ENCODE measurements at regions of chr15 and their contacts with region 1.

Region 1: DNA sequence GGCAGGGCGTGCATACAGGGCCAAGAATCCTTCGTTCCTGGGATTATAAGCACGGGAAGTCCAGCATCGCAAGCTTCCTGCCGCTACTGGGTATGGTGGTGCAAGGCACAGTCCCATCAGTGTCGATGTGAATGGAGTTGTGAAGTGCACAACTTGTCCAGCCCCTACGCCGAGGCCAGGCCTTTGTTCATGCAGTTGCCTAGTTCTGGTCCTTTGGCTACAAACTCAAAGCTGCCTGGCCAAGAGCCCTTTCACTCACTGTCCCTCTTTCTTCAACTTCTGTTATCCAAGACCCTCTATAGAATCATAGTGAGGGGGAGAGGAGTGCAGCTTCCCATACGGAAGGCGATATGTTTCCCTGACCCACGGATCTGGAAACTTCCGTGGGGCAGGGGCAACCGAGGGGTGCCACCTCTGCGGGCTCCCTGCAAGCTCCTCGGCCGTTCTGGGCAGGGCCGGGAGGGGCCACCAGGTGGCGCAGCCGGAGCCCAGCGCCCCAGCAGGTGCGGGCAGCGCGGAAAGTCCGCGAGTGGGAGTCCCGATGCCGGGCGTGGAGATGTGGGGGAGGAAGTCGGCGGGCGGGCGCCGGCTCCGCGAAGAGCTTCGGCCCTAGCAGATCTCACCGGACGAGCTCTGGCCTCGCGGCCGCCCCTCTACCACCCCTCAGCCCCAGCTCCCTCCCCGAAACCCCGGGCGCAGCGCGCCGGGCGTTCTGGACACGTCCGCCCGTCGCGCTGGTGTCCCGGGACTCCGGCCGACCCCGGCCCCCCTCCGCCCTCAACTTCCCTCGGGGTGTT is 693 bp downstream of the RASGRP1 start:
- DNase-seq: peak; percentile 75 to 88
- ATAC-seq: peak; percentile 91
- H3K4me3 ChIP-seq: peak overlapping the region; percentile 60 to 68
- H3K27ac ChIP-seq: no peak overlapping the region
- H3K4me1 ChIP-seq: no peaks in the 10 kb centered on the region
- H3K27me3 ChIP-seq: no peaks in the 10 kb centered on the region

Region 2: DNA sequence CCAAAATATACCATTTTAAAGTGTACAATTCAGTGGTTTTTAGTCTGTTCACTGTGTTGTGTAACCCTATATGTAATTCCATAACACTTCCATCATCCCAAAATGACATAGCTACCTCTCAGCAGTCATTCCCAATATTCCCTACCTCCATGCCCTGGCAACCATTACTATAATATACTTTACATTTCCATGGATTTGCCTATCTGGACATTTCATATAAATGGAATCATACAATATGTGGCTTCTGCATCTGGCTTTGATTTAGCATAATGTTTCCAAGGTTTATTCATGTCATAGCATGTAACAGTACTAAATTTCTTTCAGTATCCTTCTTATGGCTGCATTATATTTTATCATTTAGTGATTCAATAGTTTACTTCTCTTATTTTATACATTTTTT is 84.7 kb before region 1 on chr15:
- intact Hi-C with region 1: loop called in 1 of 2 experiments (anchors 5 kb)
- DNase-seq: no peak
- ATAC-seq: no peak
- H3K4me3 ChIP-seq: no peak overlapping the region
- H3K27ac ChIP-seq: no peak overlapping the region
- H3K4me1 ChIP-seq: no peaks in the 10 kb centered on the region
- H3K27me3 ChIP-seq: no peaks in the 10 kb centered on the region

Region 3: GRCh38 chr15:38631126-38632075 is 67.5 kb after region 1 on chr15:
- intact Hi-C with region 1: no loop called
- DNase-seq: no peak
- ATAC-seq: no peak
- H3K4me3 ChIP-seq: no peak overlapping the region
- H3K27ac ChIP-seq: no peak overlapping the region
- H3K4me1 ChIP-seq: no peaks in the 10 kb centered on the region
- H3K27me3 ChIP-seq: no peaks in the 10 kb centered on the region

Region 4: GRCh38 chr15:38690689-38691332 is 126.9 kb after region 1 on chr15:
- intact Hi-C with region 1: loop called in 1 of 2 experiments (anchors 5 kb)
- DNase-seq: peak; percentile 69 to 79
- ATAC-seq: peak; percentile 85
- H3K4me3 ChIP-seq: no peak overlapping the region
- H3K27ac ChIP-seq: no peak overlapping the region
- H3K4me1 ChIP-seq: no peaks in the 10 kb centered on the region
- H3K27me3 ChIP-seq: peaks cover 0 to 2% of the 10 kb centered on the region in 2 donors